Spleen (tissue), 13 donors: ENCODE measurements at regions of chr10 and their contacts with region 1.

Region 1: DNA sequence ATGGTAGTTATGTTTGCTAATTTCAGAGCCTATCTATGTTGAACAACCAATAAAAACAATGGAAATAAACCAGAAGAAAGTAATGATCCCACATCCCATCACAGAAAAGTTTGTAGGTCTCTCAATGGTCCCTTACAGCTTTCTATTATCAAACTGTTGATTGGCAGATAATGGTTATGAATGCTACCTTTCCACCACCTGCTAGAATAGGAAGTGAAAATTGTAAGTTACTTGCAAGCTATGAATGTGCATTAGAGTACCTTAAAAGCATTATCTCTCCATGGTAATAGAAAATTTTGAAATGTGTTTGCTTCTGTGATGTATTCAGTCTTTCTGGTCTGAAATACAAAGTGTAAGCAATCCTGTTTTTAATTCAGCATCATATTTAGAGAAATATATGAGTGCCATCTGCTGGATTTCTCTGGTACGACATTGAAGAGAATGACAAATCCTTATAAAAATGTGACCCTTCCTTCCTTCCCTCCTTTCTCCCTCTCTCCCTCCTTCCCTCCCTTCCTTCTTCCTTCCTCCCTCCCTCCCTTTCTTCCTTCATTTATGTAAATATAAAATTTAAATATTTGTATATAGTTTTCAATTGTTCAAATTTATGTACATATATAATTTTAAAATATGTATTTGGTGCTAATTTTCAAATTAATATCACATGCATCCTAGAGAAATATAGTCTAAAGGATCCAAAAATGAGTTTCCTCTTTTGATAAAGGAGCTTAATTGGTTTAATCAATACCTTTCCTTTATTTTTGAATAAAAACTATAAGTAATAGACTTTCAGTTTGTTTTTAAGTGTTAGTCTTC is 41.4 kb upstream of the PNLIPRP3 start:
- DNase-seq: no peak
- H3K4me3 ChIP-seq: no peak overlapping the region
- H3K27ac ChIP-seq: no peak overlapping the region
- H3K4me1 ChIP-seq: no peaks in the 10 kb centered on the region
- H3K27me3 ChIP-seq: peaks cover 0 to 8% (median 0%) of the 10 kb centered on the region in 7 donors
- CTCF ChIP-seq: peak in 9 of 11 experiments; percentile 13 to 59 (median 47)
- POLR2A ChIP-seq: no peak

Region 2: GRCh38 chr10:115167751-115168150 is 1218.5 kb before region 1 on chr10:
- intact Hi-C with region 1: loop called (anchors 10 kb)
- DNase-seq: no peak
- H3K4me3 ChIP-seq: no peak overlapping the region
- H3K27ac ChIP-seq: no peak overlapping the region
- H3K4me1 ChIP-seq: no peaks in the 10 kb centered on the region
- H3K27me3 ChIP-seq: no peaks in the 10 kb centered on the region
- CTCF ChIP-seq: no peak
- POLR2A ChIP-seq: no peak

Region 3: DNA sequence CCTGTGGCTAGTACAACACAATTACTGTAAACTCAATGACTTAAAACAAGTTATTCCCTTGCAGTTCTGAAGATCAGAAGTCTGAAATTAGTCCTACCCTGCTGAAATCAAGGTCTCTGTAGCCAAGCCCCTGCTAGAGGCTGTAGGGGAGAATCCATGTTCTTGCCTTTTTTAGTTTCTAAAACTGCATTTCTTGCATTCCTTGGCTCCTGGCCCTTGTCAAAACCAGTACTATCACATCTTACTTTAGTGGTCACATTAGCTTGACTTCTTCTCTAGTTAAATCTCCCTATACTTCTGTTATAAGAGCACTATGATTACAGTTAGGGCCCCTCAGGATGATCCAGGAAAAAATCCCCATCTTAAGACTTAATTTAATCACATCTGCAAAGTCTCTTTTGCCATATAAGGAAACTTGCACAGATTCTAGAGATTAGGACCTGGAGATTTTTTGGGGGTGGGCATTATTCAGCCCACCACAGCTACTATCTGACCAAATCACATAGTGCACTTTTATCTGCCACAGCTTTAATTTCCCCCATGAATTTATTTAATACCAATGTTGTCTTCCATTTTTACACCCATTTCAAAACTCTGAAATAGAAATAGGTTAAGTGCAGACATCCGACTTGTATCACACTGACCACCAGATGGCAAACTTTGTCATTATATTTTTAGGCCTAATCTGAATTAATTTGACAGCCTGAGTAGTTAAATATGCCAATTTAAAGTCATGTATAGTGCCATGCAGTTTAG is 680.0 kb before region 1 on chr10:
- intact Hi-C with region 1: loop called (anchors 10 kb)
- DNase-seq: no peak
- H3K4me3 ChIP-seq: no peak overlapping the region
- H3K27ac ChIP-seq: no peak overlapping the region
- H3K4me1 ChIP-seq: no peaks in the 10 kb centered on the region
- H3K27me3 ChIP-seq: no peaks in the 10 kb centered on the region
- CTCF ChIP-seq: peak in 4 of 11 experiments; percentile 17 to 31 (median 28)
- POLR2A ChIP-seq: no peak

Region 4: GRCh38 chr10:116268976-116269375 is 117.2 kb before region 1 on chr10:
- intact Hi-C with region 1: no loop called
- DNase-seq: no peak
- H3K4me3 ChIP-seq: no peak overlapping the region
- H3K27ac ChIP-seq: no peak overlapping the region
- H3K4me1 ChIP-seq: peaks cover 2 to 33% (median 26%) of the 10 kb centered on the region in 6 donors
- H3K27me3 ChIP-seq: peaks cover 0 to 82% (median 45%) of the 10 kb centered on the region in 7 donors
- CTCF ChIP-seq: no peak
- POLR2A ChIP-seq: no peak

Region 5: GRCh38 chr10:116721547-116722392 is 335.6 kb after region 1 on chr10:
- intact Hi-C with region 1: no loop called
- DNase-seq: peak; percentile 61
- H3K4me3 ChIP-seq: no peak overlapping the region
- H3K27ac ChIP-seq: no peak overlapping the region
- H3K4me1 ChIP-seq: peaks cover 0 to 44% (median 18%) of the 10 kb centered on the region in 6 donors
- H3K27me3 ChIP-seq: peaks cover 0 to 49% (median 0%) of the 10 kb centered on the region in 7 donors
- CTCF ChIP-seq: no peak
- POLR2A ChIP-seq: no peak